Aorta (tissue), 5 donors: ENCODE measurements at regions of chr1 and their contacts with region 1.

Region 1: GRCh38 chr1:40612345-40612831 is 53.1 kb downstream of the RIMS3 start:
- DNase-seq: peak in 1 of 2 donors; percentile 72
- ATAC-seq: peak; percentile 88
- H3K4me3 ChIP-seq: no peak overlapping the region
- H3K27ac ChIP-seq: no peak overlapping the region
- H3K4me1 ChIP-seq: no peaks in the 10 kb centered on the region
- H3K27me3 ChIP-seq: no peaks in the 10 kb centered on the region

Region 2: GRCh38 chr1:40668769-40669525 is 56.6 kb after region 1 on chr1:
- intact Hi-C with region 1: loop called (anchors 5 kb)
- DNase-seq: peak; percentile 88 to 94
- ATAC-seq: peak; percentile 86
- H3K4me3 ChIP-seq: no peak overlapping the region
- H3K27ac ChIP-seq: no peak overlapping the region
- H3K4me1 ChIP-seq: no peaks in the 10 kb centered on the region
- H3K27me3 ChIP-seq: no peaks in the 10 kb centered on the region

Region 3: DNA sequence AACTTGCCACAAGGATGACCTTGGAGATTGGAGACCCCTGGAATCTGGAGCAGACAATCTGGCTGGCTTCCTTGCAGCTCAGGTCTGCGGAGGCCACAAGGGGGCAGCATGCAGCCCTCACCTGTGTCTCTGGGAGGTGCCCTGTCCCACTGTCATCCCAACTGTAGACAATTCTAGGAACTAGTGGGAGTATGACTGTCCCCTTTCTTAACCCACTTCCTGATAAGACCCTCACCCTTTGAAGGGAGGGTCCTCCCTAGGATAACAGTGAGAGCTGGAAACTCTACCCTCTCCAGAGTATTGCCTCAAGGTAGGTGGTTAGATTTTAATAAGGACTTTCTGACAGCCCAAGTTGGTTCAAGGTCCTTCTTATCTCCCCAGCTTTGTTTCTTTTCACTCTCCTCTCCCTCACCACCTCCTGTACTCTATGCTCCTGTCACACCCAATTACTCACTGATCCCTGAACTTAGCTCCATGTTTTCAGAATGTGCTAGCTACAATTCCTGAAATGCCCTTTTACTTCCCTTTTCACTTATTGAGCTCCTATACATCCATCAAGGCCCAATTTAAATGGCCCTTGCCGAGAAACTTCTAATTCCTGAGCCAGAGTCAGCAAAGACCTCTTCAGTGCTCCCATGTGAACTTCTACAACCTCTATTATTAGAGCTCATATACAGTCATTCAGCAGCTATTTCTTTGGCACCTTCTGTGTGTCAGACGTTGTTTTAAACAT is 162.0 kb after region 1 on chr1:
- intact Hi-C with region 1: loop called in 1 of 2 experiments (anchors 10 kb)
- DNase-seq: peak in 1 of 2 donors; percentile 86
- ATAC-seq: peak; percentile 57
- H3K4me3 ChIP-seq: no peak overlapping the region
- H3K27ac ChIP-seq: peak overlapping the region in 1 of 2 donors; percentile 64
- H3K4me1 ChIP-seq: no peaks in the 10 kb centered on the region
- H3K27me3 ChIP-seq: no peaks in the 10 kb centered on the region

Region 4: DNA sequence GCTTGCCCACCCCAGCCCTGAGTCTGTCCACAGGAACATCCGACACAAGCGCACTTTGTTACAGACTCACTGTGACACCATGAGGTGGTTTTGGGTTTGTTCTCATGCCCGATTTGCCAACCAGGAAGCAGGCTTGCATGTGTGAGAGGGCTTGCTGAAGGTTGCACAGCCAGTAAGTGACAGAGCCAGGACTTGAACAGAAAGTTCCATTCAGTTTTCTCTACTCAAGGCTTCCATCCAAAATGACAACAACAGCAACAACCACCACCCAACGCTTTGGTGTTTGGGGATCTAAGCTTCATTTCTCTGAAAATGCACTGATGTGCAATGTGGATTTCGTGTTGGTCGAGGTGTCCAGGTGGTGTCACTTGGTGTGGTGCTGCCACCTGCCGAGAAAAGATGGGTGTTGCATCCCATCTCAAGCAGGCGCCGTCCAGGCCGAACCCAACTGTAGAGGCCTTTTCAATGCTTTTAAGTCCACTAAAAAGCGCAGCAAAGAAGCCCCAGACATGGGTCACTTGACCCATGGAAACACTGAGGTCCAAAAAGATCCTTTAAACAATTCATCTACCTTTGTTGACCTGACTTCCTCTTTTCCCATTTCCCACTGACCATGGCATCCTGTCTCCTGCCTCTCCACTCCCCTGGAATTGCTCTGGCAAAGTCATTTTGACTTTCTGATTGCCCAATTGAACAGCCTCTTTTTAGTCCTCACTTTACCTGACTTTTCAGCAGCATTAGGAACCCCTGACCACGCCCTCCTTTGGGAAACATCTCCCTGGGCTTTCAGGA is 237.6 kb after region 1 on chr1:
- intact Hi-C with region 1: loop called (anchors 2 to 5 kb)
- DNase-seq: peak in 1 of 2 donors; percentile 74
- ATAC-seq: peak; percentile 91
- H3K4me3 ChIP-seq: no peak overlapping the region
- H3K27ac ChIP-seq: no peak overlapping the region
- H3K4me1 ChIP-seq: no peaks in the 10 kb centered on the region
- H3K27me3 ChIP-seq: no peaks in the 10 kb centered on the region

Region 5: GRCh38 chr1:40951943-40952743 is 339.8 kb after region 1 on chr1:
- intact Hi-C with region 1: loop called (anchors 2 to 5 kb)
- DNase-seq: peak; percentile 74 to 90
- ATAC-seq: peak; percentile 87
- H3K4me3 ChIP-seq: no peak overlapping the region
- H3K27ac ChIP-seq: no peak overlapping the region
- H3K4me1 ChIP-seq: no peaks in the 10 kb centered on the region
- H3K27me3 ChIP-seq: no peaks in the 10 kb centered on the region